ENCODE measurements at regions of chr14 and their contacts with region 1.

Region 1: GRCh38 chr14:62126879-62127478 is 364.8 kb downstream of the SNAPC1 start:
- DNase-seq: peak; percentile 79
- ATAC-seq: peak; percentile 73
- H3K4me3 ChIP-seq: no peak overlapping the region
- H3K4me3 Mint-ChIP-seq: no peak overlapping the region
- H3K27ac ChIP-seq: no peak overlapping the region
- H3K27ac Mint-ChIP-seq: no peak overlapping the region
- H3K4me1 ChIP-seq: peaks cover 9 to 14% of the 10 kb centered on the region in 2 donors
- H3K4me1 Mint-ChIP-seq: peaks cover 37% of the 10 kb centered on the region
- H3K27me3 ChIP-seq: no peaks in the 10 kb centered on the region
- H3K27me3 Mint-ChIP-seq: no peaks in the 10 kb centered on the region
- CTCF ChIP-seq: peak; percentile 95

Region 2: GRCh38 chr14:61269321-61270083 is 857.5 kb before region 1 on chr14:
- CTCF ChIA-PET with region 1: interaction called, 3 read pairs
- POLR2A ChIA-PET with region 1: no interaction called
- intact Hi-C with region 1: loop called (anchors 1 kb)
- DNase-seq: peak; percentile 73
- ATAC-seq: peak; percentile 86
- H3K4me3 ChIP-seq: peak overlapping the region in 2 of 5 experiments; percentile 27 to 28
- H3K4me3 Mint-ChIP-seq: peak overlapping the region; percentile 68
- H3K27ac ChIP-seq: no peak overlapping the region
- H3K27ac Mint-ChIP-seq: no peak overlapping the region
- H3K4me1 ChIP-seq: peaks cover 0 to 3% of the 10 kb centered on the region in 2 donors
- H3K4me1 Mint-ChIP-seq: peaks cover 3% of the 10 kb centered on the region
- H3K27me3 ChIP-seq: peaks cover 0 to 23% (median 12%) of the 10 kb centered on the region in 4 experiments
- H3K27me3 Mint-ChIP-seq: peaks cover 60% of the 10 kb centered on the region
- CTCF ChIP-seq: peak; percentile 89

Region 3: GRCh38 chr14:61456720-61457119 is 670.3 kb before region 1 on chr14:
- CTCF ChIA-PET with region 1: interaction called, 23 read pairs
- POLR2A ChIA-PET with region 1: no interaction called
- intact Hi-C with region 1: loop called (anchors 1 kb)
- DNase-seq: peak; percentile 89
- ATAC-seq: peak; percentile 87
- H3K4me3 ChIP-seq: no peak overlapping the region
- H3K4me3 Mint-ChIP-seq: no peak overlapping the region
- H3K27ac ChIP-seq: no peak overlapping the region
- H3K27ac Mint-ChIP-seq: no peak overlapping the region
- H3K4me1 ChIP-seq: peaks cover 4 to 11% of the 10 kb centered on the region in 2 donors
- H3K4me1 Mint-ChIP-seq: peaks cover 13% of the 10 kb centered on the region
- H3K27me3 ChIP-seq: no peaks in the 10 kb centered on the region
- H3K27me3 Mint-ChIP-seq: no peaks in the 10 kb centered on the region
- CTCF ChIP-seq: peak; percentile 89

Region 4: DNA sequence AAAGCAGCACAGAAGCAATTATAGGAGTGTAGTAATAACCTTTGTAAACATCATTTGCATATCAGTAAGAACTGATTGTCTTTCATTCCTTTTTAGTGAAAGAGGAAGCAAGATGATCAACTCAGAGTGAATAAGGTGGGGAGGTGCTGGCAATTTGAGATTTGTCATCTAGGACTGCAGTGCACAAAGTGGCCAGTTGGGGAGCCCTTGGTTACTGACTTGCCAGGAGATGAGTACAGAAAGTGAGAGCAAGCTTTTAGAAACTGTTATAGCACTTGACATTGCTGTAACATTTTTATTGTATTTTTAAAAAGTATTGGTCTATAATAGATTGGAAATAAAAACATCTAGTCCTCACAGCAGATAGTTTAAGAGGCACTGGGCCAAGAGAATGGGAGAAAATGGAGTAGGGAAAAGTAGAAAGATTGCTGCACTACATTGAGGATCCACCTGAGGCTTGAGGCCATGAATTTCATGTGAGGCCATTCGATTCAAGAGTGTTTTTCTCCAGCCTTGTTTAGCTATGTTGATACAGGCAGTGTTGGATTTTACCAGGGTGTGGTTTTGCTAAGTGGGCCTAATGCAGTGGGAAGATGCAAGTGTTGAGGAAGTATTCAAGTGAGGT is 266.6 kb before region 1 on chr14:
- CTCF ChIA-PET with region 1: interaction called, 46 read pairs
- POLR2A ChIA-PET with region 1: no interaction called
- intact Hi-C with region 1: loop called (anchors 1 kb)
- DNase-seq: peak; percentile 80
- ATAC-seq: peak; percentile 100
- H3K4me3 ChIP-seq: no peak overlapping the region
- H3K4me3 Mint-ChIP-seq: no peak overlapping the region
- H3K27ac ChIP-seq: no peak overlapping the region
- H3K27ac Mint-ChIP-seq: no peak overlapping the region
- H3K4me1 ChIP-seq: peaks cover 4 to 7% of the 10 kb centered on the region in 2 donors
- H3K4me1 Mint-ChIP-seq: peaks cover 10% of the 10 kb centered on the region
- H3K27me3 ChIP-seq: peaks cover 0 to 3% (median 0%) of the 10 kb centered on the region in 4 experiments
- H3K27me3 Mint-ChIP-seq: peaks cover 14% of the 10 kb centered on the region
- CTCF ChIP-seq: peak; percentile 90

Region 5: DNA sequence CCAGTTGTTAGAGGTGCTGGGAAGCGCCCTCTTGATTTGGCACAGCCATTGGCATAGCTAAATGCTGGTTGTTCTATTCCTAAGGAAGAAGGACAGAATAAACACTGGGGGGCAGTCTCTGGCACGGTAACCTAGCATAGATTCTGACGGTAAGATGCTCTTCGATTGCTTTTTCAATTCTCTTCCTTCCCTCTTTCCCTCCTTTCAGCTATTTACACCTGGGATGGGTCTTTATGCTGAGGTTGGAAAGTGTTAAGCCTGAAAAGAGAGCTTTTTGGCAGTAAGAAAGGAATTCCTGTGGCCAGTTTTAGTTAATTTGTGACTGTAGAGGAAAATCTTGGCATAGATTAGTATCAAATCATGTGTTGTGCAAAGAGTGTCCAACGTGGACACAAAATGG is 201.9 kb before region 1 on chr14:
- CTCF ChIA-PET with region 1: interaction called, 333 read pairs
- POLR2A ChIA-PET with region 1: no interaction called
- intact Hi-C with region 1: loop called (anchors 1 kb)
- DNase-seq: peak; percentile 70
- ATAC-seq: peak; percentile 65
- H3K4me3 ChIP-seq: no peak overlapping the region
- H3K4me3 Mint-ChIP-seq: no peak overlapping the region
- H3K27ac ChIP-seq: no peak overlapping the region
- H3K27ac Mint-ChIP-seq: peak overlapping the region; percentile 23
- H3K4me1 ChIP-seq: peaks cover 3 to 8% of the 10 kb centered on the region in 2 donors
- H3K4me1 Mint-ChIP-seq: peaks cover 29% of the 10 kb centered on the region
- H3K27me3 ChIP-seq: peaks cover 0 to 4% (median 0%) of the 10 kb centered on the region in 4 experiments
- H3K27me3 Mint-ChIP-seq: peaks cover 3% of the 10 kb centered on the region
- CTCF ChIP-seq: peak; percentile 66

Region 6: GRCh38 chr14:62743560-62743959 is 616.6 kb after region 1 on chr14:
- CTCF ChIA-PET with region 1: no interaction called
- POLR2A ChIA-PET with region 1: no interaction called
- intact Hi-C with region 1: no loop called
- DNase-seq: no peak
- ATAC-seq: no peak
- H3K4me3 ChIP-seq: no peak overlapping the region
- H3K4me3 Mint-ChIP-seq: no peak overlapping the region
- H3K27ac ChIP-seq: no peak overlapping the region
- H3K27ac Mint-ChIP-seq: no peak overlapping the region
- H3K4me1 ChIP-seq: no peaks in the 10 kb centered on the region
- H3K4me1 Mint-ChIP-seq: no peaks in the 10 kb centered on the region
- H3K27me3 ChIP-seq: no peaks in the 10 kb centered on the region
- H3K27me3 Mint-ChIP-seq: no peaks in the 10 kb centered on the region
- CTCF ChIP-seq: no peak

Measured in B cell (primary cell).